Activated CD4-positive, alpha-beta memory T cell treated with anti-CD3 and anti-CD28 coated beads, Interleukin-2, amount 10 ng/mL, durations not matched to agents 7 days and 5 days (primary cell): ENCODE measurements at regions of chr11 and their contacts with region 1.

Region 1: GRCh38 chr11:59753650-59754493 is 1.3 kb upstream of the STX3 start:
- DNase-seq: peak; percentile 88
- H3K4me3 Mint-ChIP-seq: peak overlapping the region; percentile 84
- H3K27ac Mint-ChIP-seq: peak overlapping the region; percentile 83
- H3K4me1 Mint-ChIP-seq: peaks cover 37% of the 10 kb centered on the region
- H3K27me3 Mint-ChIP-seq: peaks cover 8% of the 10 kb centered on the region

Region 2: GRCh38 chr11:59668950-59669610 is 84.8 kb before region 1 on chr11 and contains the start of gene PATL1:
- CTCF ChIA-PET with region 1: interaction called, 8 read pairs
- POLR2A ChIA-PET with region 1: interaction called, 21 read pairs
- DNase-seq: peak; percentile 99
- H3K4me3 Mint-ChIP-seq: peak within 1 kb of the TSS; percentile 95
- H3K27ac Mint-ChIP-seq: peak within 1 kb of the TSS; percentile 98
- H3K4me1 Mint-ChIP-seq: peaks cover 44% of the 10 kb centered on the region
- H3K27me3 Mint-ChIP-seq: no peaks in the 10 kb centered on the region
- total RNA-seq, gene PATL1: 56.4 to 56.8 TPM

Region 3: DNA sequence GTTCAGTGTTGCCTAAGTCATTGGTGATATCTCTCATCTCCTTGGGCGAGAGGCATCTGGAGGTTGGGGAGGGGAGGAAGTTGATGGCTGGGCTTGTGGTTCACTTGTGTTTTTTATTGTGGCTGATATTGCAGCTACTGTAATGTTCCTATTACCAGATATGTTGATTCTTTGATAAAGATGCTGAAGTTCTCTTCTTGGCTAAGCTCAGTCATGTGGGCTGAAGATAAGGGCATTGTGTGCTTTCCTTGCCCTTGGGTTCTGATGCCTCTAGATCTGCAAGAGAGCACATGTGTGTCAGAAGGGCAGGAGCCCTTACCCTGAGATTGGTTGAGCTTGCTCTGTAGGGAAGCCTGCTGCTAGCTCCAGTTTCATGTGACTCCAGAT is 13.3 kb after region 1 on chr11:
- CTCF ChIA-PET with region 1: interaction called, 31 read pairs
- POLR2A ChIA-PET with region 1: interaction called, 63 read pairs
- DNase-seq: peak; percentile 63
- H3K4me3 Mint-ChIP-seq: no peak overlapping the region
- H3K27ac Mint-ChIP-seq: no peak overlapping the region
- H3K4me1 Mint-ChIP-seq: peaks cover 35% of the 10 kb centered on the region
- H3K27me3 Mint-ChIP-seq: no peaks in the 10 kb centered on the region

Region 4: GRCh38 chr11:59776210-59777066 is 22.6 kb after region 1 on chr11:
- CTCF ChIA-PET with region 1: interaction called, 8 read pairs
- POLR2A ChIA-PET with region 1: interaction called, 50 read pairs
- DNase-seq: no peak
- H3K4me3 Mint-ChIP-seq: no peak overlapping the region
- H3K27ac Mint-ChIP-seq: peak overlapping the region; percentile 37
- H3K4me1 Mint-ChIP-seq: peaks cover 81% of the 10 kb centered on the region
- H3K27me3 Mint-ChIP-seq: no peaks in the 10 kb centered on the region

Region 5: DNA sequence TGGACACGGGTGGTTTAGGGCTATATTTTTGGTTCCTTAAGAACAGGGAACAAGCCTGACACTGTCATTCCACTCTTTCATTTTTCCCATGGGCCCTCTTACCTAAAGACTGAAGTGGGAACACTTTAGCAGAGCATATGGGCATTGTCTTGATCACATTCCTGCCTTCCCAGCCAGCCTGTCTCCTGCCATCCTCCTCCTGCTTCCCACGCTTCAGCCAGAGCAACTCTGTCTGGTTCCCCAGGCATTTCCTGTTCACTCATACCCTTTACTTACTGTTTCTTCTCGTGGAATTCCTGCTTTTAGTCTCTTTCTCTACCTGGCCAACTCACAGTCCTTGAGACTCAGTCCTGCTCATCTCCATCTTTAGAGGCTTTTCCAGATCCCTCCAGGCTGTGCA is 33.9 kb after region 1 on chr11:
- CTCF ChIA-PET with region 1: interaction called, 21 read pairs
- POLR2A ChIA-PET with region 1: interaction called, 61 read pairs
- DNase-seq: no peak
- H3K4me3 Mint-ChIP-seq: no peak overlapping the region
- H3K27ac Mint-ChIP-seq: no peak overlapping the region
- H3K4me1 Mint-ChIP-seq: peaks cover 54% of the 10 kb centered on the region
- H3K27me3 Mint-ChIP-seq: no peaks in the 10 kb centered on the region

Region 6: GRCh38 chr11:59802639-59803176 is 48.8 kb after region 1 on chr11:
- CTCF ChIA-PET with region 1: interaction called, 99 read pairs
- POLR2A ChIA-PET with region 1: interaction called, 64 read pairs
- DNase-seq: peak; percentile 43
- H3K4me3 Mint-ChIP-seq: no peak overlapping the region
- H3K27ac Mint-ChIP-seq: peak overlapping the region; percentile 60
- H3K4me1 Mint-ChIP-seq: peaks cover 31% of the 10 kb centered on the region
- H3K27me3 Mint-ChIP-seq: no peaks in the 10 kb centered on the region

Region 7: DNA sequence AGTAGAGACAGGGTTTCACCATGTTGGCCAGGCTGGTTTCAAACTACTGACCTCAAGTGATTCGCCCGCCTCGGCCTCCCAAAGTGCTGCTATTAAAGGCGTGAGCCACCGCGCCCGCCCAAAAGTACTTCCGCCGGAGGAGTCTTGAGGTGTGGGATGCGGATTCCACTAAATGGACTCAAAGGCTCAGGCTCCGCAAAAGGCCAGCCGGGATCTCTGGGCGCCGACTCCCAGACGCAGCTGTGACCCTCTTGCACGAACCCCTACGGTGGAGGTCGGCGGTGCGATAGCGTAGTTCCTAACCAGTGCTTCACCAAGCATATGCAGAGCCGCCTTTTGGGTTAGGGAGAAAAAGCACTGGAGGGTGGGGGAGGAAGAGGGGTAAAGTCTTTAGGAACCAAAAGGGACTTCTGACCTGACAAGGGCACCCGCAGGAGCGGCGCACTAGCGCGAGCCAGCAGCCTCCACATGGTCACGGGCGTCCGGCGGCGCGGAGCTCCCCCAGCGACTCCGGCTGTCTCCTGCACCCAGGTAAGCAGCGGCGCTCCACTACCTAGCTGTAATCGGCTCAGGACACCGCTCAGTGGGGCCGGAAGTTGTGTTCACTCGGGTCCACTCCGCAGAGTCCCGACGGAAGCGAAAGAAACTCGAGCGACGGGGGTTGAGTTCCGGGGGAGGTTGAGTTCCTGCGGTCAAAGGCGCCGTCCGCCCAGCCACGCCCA is 56.5 kb after region 1 on chr11 and contains the start of gene MRPL16:
- CTCF ChIA-PET with region 1: interaction called, 99 read pairs
- POLR2A ChIA-PET with region 1: interaction called, 64 read pairs
- DNase-seq: peak; percentile 93
- H3K4me3 Mint-ChIP-seq: peak within 1 kb of the TSS; percentile 90
- H3K27ac Mint-ChIP-seq: peak within 1 kb of the TSS; percentile 91
- H3K4me1 Mint-ChIP-seq: peaks cover 48% of the 10 kb centered on the region
- H3K27me3 Mint-ChIP-seq: no peaks in the 10 kb centered on the region
- total RNA-seq, gene MRPL16: 77.0 to 77.7 TPM

Region 8: DNA sequence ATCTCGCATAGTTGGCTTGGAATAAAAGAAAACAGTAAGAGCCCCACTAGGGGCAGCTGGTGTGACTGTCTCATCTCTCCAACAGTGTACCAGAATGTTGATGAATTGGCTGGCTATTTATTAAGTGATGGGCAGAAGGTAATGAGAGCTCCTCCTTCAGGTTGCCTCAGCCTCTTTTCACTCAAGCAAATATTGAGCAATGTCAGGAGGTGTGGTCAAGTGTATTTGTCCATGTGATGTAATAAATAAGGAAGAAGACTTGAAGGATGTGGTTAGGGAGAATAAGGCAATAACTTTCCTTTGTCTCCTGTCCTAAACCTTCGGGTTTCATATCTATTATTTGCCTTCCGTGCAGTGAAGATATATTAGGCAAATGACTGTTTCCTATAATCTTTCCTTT is 112.5 kb after region 1 on chr11 and contains the start of gene TCN1:
- CTCF ChIA-PET with region 1: no interaction called
- POLR2A ChIA-PET with region 1: no interaction called
- DNase-seq: no peak
- H3K4me3 Mint-ChIP-seq: no peak within 1 kb of the TSS
- H3K27ac Mint-ChIP-seq: no peak within 1 kb of the TSS
- H3K4me1 Mint-ChIP-seq: peaks cover 5% of the 10 kb centered on the region
- H3K27me3 Mint-ChIP-seq: peaks cover 12% of the 10 kb centered on the region
- total RNA-seq, gene TCN1: not detected